ENCODE measurements at regions of chr5 and their contacts with region 1.

Region 1: GRCh38 chr5:120866997-120867396 is 402.9 kb downstream of the PRR16 start:
- DNase-seq: no peak

Region 2: DNA sequence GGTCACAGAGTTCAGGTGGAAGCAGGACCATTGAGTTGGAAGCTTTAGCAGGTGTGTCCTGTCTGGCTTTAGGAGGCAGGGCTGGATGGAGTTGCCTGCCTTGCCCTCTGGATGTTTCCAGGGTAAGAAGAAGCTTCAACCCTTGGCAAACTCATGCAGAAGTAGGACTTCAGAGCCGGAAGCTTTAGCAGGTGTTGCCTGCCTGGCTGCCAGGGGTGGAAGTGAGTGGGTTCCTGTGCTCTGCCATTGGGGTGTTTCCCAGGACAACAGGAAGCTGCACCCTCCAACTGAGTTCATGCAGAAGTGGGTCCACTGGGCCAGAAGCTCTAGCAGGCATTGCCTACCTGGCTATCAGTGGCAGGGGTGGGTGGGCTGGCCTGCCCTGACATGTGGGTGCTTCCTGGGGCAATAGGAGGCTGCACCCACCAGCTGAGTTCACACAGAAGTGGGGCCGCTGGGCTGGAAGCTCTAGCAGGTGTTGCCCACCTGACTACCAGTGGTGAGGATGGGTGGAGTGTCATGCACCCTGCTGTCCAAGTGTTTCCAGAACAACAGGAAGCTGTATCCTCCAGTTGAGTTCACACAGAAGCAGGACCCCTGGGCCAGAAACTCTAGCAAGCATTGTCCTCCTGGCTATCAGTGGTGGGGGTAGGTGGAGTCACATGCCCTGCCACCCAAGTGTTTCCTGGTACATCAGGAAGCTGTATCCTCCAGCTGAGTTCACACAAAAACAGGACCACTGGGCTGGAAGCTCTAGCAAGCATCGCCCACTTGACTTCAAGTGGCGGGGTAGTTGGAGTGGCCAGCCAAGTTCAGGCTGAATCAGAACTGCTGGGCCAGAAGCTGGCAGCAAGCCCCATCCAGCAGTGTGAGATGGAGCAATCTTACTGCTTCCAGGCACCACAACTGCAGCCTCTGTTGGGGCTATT is 1186.4 kb after region 1 on chr5:
- intact Hi-C with region 1: loop called in 1 of 2 experiments (anchors 5 kb)
- DNase-seq: peak; percentile 82

Measured in posterior vena cava (tissue), 2 donors.